Activated CD8-positive, alpha-beta T cell treated with anti-CD3 and anti-CD28 coated beads, Interleukin-2, amount 10 ng/mL, durations not matched to agents 7 days and 5 days (primary cell): ENCODE measurements at regions of chr17 and their contacts with region 1.

Region 1: DNA sequence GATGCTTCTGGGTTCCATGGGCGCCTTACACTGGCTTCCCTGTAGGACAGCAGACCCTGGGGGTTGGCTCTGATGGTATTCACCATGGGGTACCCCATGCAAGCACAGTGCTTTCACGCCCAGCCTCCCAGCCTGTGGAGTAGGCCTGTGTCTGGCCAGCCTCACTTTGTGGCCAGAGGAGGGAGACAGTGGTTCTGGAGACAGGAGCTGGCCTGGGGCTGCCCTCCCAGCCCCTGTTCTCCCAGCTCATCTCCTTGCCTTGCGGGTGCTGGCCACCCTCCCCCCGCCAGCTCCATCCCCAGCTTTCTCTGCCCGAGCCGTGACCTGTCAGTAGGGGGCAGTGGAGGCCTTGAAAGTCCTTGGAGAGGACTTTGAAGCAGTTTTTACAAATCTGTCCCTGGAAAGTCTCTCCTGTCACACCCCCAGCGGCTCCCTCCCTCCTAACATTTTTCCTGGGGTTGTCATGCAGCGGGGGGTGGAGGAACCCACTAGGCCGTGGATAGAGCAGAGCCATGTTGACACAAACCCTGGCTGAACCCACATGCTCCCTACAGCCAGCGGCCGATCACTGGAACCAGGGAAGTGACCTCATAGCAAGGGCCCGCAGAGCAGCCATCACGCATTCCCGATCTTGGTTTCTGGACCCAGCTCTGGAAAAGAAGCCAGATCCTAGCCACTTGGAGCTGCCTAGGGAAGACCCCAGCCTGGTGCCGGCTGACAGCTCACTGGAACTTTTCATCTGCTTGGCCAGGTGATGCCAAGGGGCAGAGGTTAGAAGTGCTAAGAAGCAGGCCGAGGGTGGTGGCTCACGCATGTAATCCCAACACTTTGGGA is 289.4 kb downstream of the SEC14L1 start:
- DNase-seq: peak; percentile 87
- ATAC-seq: peak; percentile 24
- H3K4me3 Mint-ChIP-seq: no peak overlapping the region
- H3K27ac Mint-ChIP-seq: peak overlapping the region; percentile 57
- H3K4me1 Mint-ChIP-seq: peaks cover 96% of the 10 kb centered on the region
- H3K27me3 Mint-ChIP-seq: no peaks in the 10 kb centered on the region

Region 2: GRCh38 chr17:77331301-77331864 is 98.8 kb before region 1 on chr17:
- CTCF ChIA-PET with region 1: interaction called, 25 read pairs
- POLR2A ChIA-PET with region 1: interaction called, 3 read pairs
- DNase-seq: peak; percentile 97
- ATAC-seq: peak; percentile 90
- H3K4me3 Mint-ChIP-seq: peak overlapping the region; percentile 76
- H3K27ac Mint-ChIP-seq: peak overlapping the region; percentile 88
- H3K4me1 Mint-ChIP-seq: peaks cover 58% of the 10 kb centered on the region
- H3K27me3 Mint-ChIP-seq: peaks cover 2% of the 10 kb centered on the region

Region 3: DNA sequence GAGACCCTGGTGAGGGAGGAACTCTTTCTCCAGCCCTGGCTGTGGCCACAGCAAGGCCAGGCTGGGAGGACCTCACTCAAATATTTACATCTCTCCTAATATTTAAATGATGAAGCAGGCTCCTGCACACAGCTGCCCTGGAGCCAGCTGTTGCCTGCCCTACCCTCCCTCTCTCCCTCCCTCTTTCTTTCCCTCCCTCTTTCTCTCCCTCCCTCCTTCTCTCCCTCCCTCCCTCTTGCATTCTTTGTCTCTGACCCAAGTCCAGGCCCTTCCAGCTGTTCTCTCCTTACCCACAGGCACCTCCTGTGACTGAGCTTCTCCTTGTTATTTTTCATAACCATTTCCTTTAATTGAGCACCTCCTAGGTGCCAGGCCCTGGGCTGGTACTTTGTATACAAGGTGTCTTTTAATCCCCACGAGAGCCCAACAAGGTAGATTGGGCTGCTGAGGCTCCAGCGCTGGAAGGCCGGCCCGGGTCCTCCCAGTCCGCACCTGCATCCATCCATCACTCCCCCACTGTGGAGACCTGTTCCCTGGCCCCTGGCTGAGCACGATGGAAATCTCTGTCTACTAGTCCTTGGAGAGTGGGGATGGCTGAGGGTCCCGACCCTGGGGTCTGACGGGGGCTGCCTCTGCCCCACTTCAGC is 47.0 kb before region 1 on chr17:
- CTCF ChIA-PET with region 1: interaction called, 20 read pairs
- POLR2A ChIA-PET with region 1: interaction called, 5 read pairs
- DNase-seq: no peak
- ATAC-seq: peak; percentile 20
- H3K4me3 Mint-ChIP-seq: peak overlapping the region; percentile 76
- H3K27ac Mint-ChIP-seq: peak overlapping the region; percentile 91
- H3K4me1 Mint-ChIP-seq: peaks cover 93% of the 10 kb centered on the region
- H3K27me3 Mint-ChIP-seq: no peaks in the 10 kb centered on the region

Region 4: GRCh38 chr17:77444984-77445759 is 15.0 kb after region 1 on chr17:
- CTCF ChIA-PET with region 1: interaction called, 71 read pairs
- POLR2A ChIA-PET with region 1: interaction called, 169 read pairs
- DNase-seq: peak; percentile 94
- ATAC-seq: peak; percentile 66
- H3K4me3 Mint-ChIP-seq: peak overlapping the region; percentile 82
- H3K27ac Mint-ChIP-seq: peak overlapping the region; percentile 90
- H3K4me1 Mint-ChIP-seq: peaks cover 96% of the 10 kb centered on the region
- H3K27me3 Mint-ChIP-seq: no peaks in the 10 kb centered on the region

Region 5: GRCh38 chr17:77465358-77466041 is 35.4 kb after region 1 on chr17:
- CTCF ChIA-PET with region 1: interaction called, 99 read pairs
- POLR2A ChIA-PET with region 1: interaction called, 18 read pairs
- DNase-seq: peak; percentile 92
- ATAC-seq: peak; percentile 80
- H3K4me3 Mint-ChIP-seq: peak overlapping the region; percentile 63
- H3K27ac Mint-ChIP-seq: peak overlapping the region; percentile 91
- H3K4me1 Mint-ChIP-seq: peaks cover 90% of the 10 kb centered on the region
- H3K27me3 Mint-ChIP-seq: no peaks in the 10 kb centered on the region

Region 6: DNA sequence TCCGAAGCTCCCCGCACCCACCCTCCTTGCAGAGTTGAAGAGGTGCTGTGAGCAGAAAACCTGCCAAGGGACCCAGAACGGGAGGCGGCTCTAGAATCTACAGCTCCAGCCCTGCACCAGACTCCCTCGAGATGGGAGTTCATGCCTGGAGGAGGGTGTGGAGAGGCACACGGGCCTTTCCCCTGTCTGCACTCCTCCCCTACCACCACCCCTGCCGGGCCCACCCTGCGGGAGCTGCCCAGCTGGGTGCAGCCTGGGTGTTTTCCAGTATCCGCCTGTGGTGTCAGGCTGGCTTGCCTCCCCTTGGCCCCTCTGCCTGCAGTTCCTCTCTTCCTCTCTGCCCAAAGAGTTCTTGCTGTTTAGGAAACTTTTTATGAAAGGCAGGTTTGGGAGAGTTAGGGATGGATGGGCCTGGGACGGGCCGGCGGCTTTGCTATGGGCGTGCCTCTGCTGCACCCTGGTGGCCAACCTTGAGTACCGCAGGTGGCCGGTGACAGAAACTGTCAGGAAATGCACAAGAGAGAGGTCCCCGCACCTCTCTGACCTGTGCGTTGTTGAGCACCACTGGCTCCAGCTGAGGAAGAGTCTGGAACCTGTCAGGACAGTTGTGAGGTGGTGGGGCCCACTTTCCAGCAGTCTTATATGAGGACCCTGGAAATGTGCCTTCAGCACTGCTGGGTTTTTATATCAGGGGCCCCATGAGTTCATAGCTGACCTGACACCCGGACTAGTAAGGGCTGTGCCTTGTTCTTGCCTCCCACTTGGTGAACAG is 64.7 kb after region 1 on chr17:
- CTCF ChIA-PET with region 1: interaction called, 60 read pairs
- POLR2A ChIA-PET with region 1: interaction called, 3 read pairs
- DNase-seq: peak; percentile 83
- ATAC-seq: peak; percentile 66
- H3K4me3 Mint-ChIP-seq: no peak overlapping the region
- H3K27ac Mint-ChIP-seq: peak overlapping the region; percentile 78
- H3K4me1 Mint-ChIP-seq: peaks cover 40% of the 10 kb centered on the region
- H3K27me3 Mint-ChIP-seq: no peaks in the 10 kb centered on the region